Common myeloid progenitor, CD34-positive (primary cell): ENCODE measurements at regions of chr1 and their contacts with region 1.

Region 1: DNA sequence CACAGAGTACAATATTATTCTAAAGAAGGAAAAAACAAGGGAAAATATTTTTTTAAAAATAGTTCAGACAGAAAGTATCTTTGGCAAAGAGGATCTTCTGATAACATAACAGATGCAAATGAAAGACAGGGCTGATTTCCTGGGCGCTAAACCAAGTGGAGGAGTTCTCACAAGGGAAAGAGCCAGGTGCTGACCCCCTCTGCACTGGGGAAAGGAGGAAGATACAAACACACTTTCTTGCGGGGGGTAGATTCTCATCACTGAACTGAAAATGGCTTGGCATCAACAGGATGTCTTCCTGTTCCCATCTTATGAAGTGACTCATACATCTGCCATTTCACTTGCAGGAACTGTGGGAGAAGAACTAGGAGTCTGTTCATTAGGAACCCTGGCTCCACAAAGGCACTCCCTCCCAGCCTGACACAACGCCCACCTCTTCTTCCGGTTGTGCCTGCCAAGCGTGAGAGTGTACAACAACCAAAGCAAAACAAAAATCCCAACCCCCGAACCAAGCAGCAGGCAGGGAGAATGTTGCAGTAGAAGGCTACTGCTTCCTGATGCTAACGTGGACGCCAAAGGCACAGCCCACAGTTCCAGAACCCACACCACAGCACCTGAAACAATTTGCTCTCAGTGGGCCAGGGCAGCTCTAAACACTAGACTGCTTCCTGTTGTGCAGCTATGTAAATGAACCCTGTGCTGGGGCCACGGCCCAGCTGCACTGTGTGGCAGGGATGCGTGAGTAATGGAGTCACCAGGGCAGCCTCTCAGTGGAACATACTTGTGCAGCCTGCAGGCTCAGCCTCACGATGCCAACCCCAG is 51.0 kb downstream of the GADD45A start:
- DNase-seq: peak in 2 of 3 donors; percentile 51 to 67
- H3K4me3 ChIP-seq: peak overlapping the region in 4 of 7 experiments; percentile 19 to 58 (median 24)
- H3K27ac ChIP-seq: peak overlapping the region in 1 of 2 experiments; percentile 4
- H3K4me1 ChIP-seq: peaks cover 9 to 68% (median 45%) of the 10 kb centered on the region in 4 experiments
- H3K27me3 ChIP-seq: no peaks in the 10 kb centered on the region

Region 2: GRCh38 chr1:67719329-67720196 is 16.5 kb before region 1 on chr1:
- CTCF ChIA-PET with region 1: interaction called, 12 read pairs
- POLR2A ChIA-PET with region 1: no interaction called
- DNase-seq: peak in 2 of 3 donors; percentile 75 to 87
- H3K4me3 ChIP-seq: no peak overlapping the region
- H3K27ac ChIP-seq: no peak overlapping the region
- H3K4me1 ChIP-seq: peaks cover 13 to 26% (median 16%) of the 10 kb centered on the region in 4 experiments
- H3K27me3 ChIP-seq: no peaks in the 10 kb centered on the region

Region 3: DNA sequence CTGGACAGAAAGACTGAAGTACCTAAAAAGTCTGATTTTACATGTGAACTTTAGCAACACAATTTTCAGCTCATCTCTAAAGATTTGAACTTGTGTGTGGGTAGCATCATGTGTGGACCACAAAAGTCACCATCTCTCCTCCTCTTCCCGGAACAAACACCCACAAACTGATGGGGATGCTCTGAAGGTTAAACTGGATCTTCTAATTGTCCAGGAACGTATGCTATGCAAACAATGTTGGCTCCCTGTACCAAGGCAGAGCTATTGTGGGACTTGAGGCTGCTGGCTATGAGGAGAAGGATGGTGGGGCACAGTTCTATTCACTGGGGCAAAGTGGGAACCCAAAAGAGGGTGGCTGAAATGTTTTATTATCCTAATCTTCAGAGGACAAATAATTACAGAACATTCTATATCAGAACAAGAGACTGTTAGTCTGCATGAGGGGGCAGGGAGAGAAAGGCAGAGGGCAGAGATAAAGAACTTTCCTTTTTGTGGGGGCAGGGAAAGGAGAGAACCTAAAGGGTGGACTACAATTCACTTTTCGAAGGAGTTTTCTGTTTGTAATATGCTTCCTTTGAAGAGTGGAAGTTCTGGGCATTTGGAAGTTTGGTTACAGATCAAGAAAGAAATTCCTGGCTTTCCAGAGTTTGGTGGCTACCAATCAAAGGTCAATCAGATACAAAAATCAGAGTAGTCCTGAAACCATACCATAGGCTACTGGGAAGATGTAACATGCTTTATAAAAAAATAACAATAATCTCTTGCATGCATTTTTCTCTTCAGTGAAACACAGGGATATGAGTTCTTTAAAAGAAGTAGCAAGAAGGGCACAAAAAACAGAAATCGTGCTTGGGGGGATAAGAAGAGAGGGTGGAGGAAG is 11.9 kb after region 1 on chr1:
- CTCF ChIA-PET with region 1: interaction called, 10 read pairs
- POLR2A ChIA-PET with region 1: interaction called, 4 read pairs
- DNase-seq: no peak
- H3K4me3 ChIP-seq: peak overlapping the region in 3 of 7 experiments; percentile 30 to 48 (median 33)
- H3K27ac ChIP-seq: no peak overlapping the region
- H3K4me1 ChIP-seq: peaks cover 14 to 51% (median 28%) of the 10 kb centered on the region in 4 experiments
- H3K27me3 ChIP-seq: no peaks in the 10 kb centered on the region

Region 4: DNA sequence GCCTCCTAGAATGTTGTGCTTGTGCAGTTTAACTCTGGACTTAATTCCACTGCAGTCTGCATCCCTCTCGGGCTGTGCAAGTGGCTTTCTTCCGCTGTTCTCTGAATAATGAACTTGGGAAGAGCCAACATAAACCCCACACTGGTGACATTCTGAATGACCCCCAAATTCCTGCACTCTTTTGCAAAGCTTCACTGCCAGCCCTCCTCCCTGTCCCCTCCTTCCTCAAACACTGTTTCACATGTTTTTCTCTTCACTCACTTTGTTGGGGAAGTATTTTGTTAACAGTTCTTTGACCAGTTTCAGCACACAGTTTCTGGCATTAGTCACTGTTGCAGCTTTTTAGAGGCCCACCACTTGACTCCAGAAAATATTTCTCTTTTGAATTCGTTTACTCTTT is 57.5 kb after region 1 on chr1:
- CTCF ChIA-PET with region 1: no interaction called
- POLR2A ChIA-PET with region 1: no interaction called
- DNase-seq: no peak
- H3K4me3 ChIP-seq: no peak overlapping the region
- H3K27ac ChIP-seq: no peak overlapping the region
- H3K4me1 ChIP-seq: no peaks in the 10 kb centered on the region
- H3K27me3 ChIP-seq: peaks cover 0 to 4% (median 0%) of the 10 kb centered on the region in 5 experiments